ENCODE measurements at regions of chr3 and their contacts with region 1.

Region 1: GRCh38 chr3:159884661-159885402 is 103.8 kb upstream of the IL12A start:
- DNase-seq: no peak
- H3K4me3 ChIP-seq: no peak overlapping the region
- H3K27ac ChIP-seq: no peak overlapping the region
- H3K4me1 ChIP-seq: peaks cover 0 to 6% (median 1%) of the 10 kb centered on the region in 4 experiments; a peak in 3 of 7 replicates
- H3K27me3 ChIP-seq: no peaks in the 10 kb centered on the region
- CTCF ChIP-seq: peak in 2 of 3 experiments; percentile 44 to 52; a peak in 2 of 4 replicates
- EP300 ChIP-seq: no peak
- POLR2A ChIP-seq: no peak
- RAD21 ChIP-seq: peak; percentile 57 to 59

Region 2: DNA sequence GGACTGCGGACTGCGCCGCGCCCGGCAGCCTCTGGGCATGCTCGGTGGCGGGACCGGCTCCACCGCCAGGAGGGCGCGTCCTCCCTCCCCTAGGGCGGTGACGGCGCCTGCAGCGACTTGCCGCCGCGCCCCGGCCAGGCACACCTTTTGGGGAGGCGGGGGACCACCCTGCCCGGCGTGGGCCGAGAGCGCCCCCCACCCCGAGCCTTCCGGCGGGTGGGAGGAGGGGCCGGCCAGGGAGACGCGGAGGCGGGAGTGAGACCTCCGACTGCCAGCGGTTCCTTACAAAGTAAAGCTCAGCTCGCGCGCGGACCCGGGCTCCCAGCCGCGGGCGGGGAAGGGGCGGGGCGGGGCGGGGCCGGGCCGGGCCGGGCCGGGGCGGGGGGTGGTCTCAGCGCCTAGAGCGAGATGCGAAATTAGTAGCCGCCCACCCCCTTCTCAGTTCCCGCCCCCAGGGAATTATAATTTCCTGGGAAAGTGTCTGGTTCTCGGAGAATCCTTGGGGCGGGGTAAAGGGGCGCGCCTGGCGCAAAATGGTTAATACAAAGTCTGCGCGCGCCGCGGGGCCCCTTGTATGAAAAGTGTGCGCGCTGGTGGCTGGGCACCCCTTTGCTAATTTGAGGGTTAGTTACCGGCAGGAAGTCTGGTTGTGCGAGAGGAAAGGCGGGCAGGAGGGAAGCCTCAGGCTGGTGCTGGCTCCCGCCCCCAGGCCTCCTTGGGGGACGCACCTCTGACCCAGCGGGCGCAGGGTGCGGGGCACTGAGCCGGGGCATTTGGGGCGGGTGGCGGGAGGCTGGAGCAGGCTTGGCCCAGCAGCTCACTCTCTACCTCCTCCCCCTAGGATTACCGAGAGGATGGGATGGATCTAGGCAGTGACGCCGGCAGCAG is 121.0 kb before region 1 on chr3:
- CTCF ChIA-PET with region 1: no interaction called
- POLR2A ChIA-PET with region 1: no interaction called
- DNase-seq: peak; percentile 69 to 87
- H3K4me3 ChIP-seq: peak overlapping the region; percentile 65 to 87 (median 78)
- H3K27ac ChIP-seq: peak overlapping the region; percentile 54
- H3K4me1 ChIP-seq: peaks cover 5 to 19% (median 6%) of the 10 kb centered on the region in 4 experiments; a peak in 6 of 7 replicates
- H3K27me3 ChIP-seq: peaks cover 0 to 2% (median 0%) of the 10 kb centered on the region in 4 experiments; a peak in 2 of 7 replicates
- CTCF ChIP-seq: peak in 2 of 3 experiments; percentile 24 to 29; a peak in 3 of 4 replicates
- EP300 ChIP-seq: no peak
- POLR2A ChIP-seq: peak; percentile 14 to 78; a peak in 2 of 3 replicates
- RAD21 ChIP-seq: no peak; a peak in 1 of 4 replicates

Region 3: GRCh38 chr3:159828542-159828943 is 56.3 kb before region 1 on chr3:
- CTCF ChIA-PET with region 1: interaction called, 88 read pairs
- POLR2A ChIA-PET with region 1: no interaction called
- DNase-seq: no peak
- H3K4me3 ChIP-seq: no peak overlapping the region
- H3K27ac ChIP-seq: no peak overlapping the region
- H3K4me1 ChIP-seq: no peaks in the 10 kb centered on the region
- H3K27me3 ChIP-seq: no peaks in the 10 kb centered on the region
- CTCF ChIP-seq: peak in 2 of 3 experiments; percentile 33 to 38; a peak in 2 of 4 replicates
- EP300 ChIP-seq: no peak
- POLR2A ChIP-seq: no peak
- RAD21 ChIP-seq: peak; percentile 56 to 62

Region 4: DNA sequence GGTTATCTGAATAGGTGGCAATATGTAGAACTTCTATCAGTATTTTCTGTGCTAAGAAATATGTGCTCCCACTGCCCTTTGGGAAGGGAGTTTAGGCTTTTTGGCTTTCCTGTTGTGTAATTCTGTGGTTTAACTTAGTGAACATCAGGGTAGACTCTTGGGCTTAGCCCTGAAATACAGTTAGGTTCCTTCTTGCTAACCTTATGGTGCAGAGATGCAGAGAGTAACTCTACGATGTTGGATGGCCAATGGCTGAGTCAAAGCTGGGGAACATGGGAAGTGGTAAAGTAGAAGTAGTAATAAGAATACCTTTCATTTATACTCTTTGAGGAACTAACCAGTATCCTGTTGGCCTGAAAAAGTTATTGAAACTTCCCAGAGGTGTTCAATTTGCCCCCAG is 23.0 kb after region 1 on chr3:
- CTCF ChIA-PET with region 1: interaction called, 10 read pairs
- POLR2A ChIA-PET with region 1: interaction called, 4 read pairs
- DNase-seq: no peak
- H3K4me3 ChIP-seq: no peak overlapping the region
- H3K27ac ChIP-seq: no peak overlapping the region
- H3K4me1 ChIP-seq: no peaks in the 10 kb centered on the region
- H3K27me3 ChIP-seq: no peaks in the 10 kb centered on the region
- CTCF ChIP-seq: no peak
- EP300 ChIP-seq: no peak
- POLR2A ChIP-seq: no peak
- RAD21 ChIP-seq: no peak

Region 5: DNA sequence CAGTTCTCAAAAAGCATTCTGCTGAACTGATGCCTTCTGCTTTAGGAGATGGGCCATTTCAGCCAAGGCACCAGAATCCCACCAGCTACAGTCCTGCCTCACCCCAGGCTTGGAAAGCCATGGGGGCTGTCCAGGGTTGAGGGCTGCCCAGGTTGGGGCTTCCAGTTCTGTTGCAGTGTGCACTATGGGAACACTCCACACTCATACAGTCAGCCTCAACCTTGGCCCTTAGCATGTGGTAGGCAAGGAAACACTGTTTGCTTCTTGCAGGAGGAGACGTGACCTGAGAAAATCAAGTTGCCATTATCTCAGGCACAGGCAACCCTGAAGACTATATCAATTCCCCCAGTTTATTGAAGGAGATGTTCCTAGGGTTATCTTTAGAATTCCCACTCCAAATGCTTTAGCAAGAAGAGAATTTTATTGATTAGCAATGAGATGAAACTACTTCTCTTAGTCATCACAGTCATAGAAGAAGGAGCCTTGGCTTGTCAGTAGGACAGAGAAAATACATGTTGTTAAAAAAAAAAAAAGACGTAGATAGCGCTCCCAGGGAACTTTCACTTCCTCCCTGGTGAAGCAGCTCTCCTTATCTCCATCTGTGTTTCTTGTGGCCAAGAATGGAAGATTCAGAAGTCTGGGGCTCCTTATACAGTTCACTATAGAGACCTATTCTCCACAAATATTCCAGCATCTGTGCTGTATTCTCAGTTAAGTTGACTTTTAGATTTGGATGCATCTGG is 65.5 kb after region 1 on chr3:
- CTCF ChIA-PET with region 1: interaction called, 13 read pairs
- POLR2A ChIA-PET with region 1: no interaction called
- DNase-seq: no peak
- H3K4me3 ChIP-seq: no peak overlapping the region
- H3K27ac ChIP-seq: no peak overlapping the region
- H3K4me1 ChIP-seq: no peaks in the 10 kb centered on the region
- H3K27me3 ChIP-seq: no peaks in the 10 kb centered on the region
- CTCF ChIP-seq: no peak
- EP300 ChIP-seq: no peak
- POLR2A ChIP-seq: no peak
- RAD21 ChIP-seq: no peak

Region 6: GRCh38 chr3:160003520-160004128 is 118.8 kb after region 1 on chr3:
- CTCF ChIA-PET with region 1: interaction called, 238 read pairs
- POLR2A ChIA-PET with region 1: no interaction called
- DNase-seq: peak in 1 of 2 experiments; percentile 76
- H3K4me3 ChIP-seq: no peak overlapping the region
- H3K27ac ChIP-seq: no peak overlapping the region
- H3K4me1 ChIP-seq: peaks cover 0 to 6% (median 3%) of the 10 kb centered on the region in 4 experiments; a peak in 3 of 7 replicates
- H3K27me3 ChIP-seq: no peaks in the 10 kb centered on the region
- CTCF ChIP-seq: peak; percentile 76 to 78 (median 77)
- EP300 ChIP-seq: no peak
- POLR2A ChIP-seq: no peak
- RAD21 ChIP-seq: peak; percentile 65 to 76

Measured in H1 (cell line).